ENCODE measurements at regions of chr12 and their contacts with region 1.

Region 1: DNA sequence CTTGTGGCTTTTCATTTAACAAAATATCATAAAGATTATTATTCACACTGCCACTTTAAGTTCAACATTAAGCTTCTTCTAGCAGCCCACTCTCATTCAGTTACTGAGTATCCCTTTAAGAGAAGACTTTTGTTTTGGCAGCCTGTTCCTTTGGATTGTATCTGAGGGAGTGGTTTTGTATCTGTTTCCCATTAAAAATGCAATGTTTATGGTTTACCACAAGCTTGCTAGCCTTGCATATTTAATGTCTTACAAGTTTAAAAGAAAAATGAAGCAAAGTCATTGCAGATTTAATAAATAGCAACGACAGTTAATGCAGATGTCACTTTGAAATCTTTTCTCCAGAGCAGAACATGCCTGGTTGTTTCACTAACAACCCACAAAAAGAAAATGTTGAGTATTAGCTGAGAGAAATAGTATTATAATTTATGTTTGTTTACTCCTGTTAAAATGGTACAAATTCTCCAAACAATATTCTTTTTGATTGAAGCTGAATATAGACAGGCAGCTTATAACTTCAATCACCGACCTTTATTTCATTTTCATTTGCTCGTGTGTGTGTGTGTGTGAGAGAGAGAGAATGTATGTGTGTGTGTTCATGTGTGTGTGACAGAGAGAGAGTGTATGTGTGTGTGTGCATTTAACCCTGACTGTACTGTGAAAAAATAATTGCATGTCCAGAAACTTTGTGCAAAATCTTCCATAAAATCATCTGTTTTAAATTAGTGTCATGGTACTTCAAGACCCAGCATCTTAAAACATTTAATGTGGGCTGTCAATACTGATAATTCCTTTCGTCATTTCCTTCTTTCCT is 1.8 kb downstream of the DCN start:
- DNase-seq: no peak

Region 2: GRCh38 chr12:91332302-91332701 is 151.5 kb after region 1 on chr12:
- intact Hi-C with region 1: loop called in 1 of 2 experiments (anchors 10 kb)
- DNase-seq: no peak

Measured in posterior vena cava (tissue), 2 donors.